PC-3 (cell line): ENCODE measurements at regions of chr14 and their contacts with region 1.

Region 1: DNA sequence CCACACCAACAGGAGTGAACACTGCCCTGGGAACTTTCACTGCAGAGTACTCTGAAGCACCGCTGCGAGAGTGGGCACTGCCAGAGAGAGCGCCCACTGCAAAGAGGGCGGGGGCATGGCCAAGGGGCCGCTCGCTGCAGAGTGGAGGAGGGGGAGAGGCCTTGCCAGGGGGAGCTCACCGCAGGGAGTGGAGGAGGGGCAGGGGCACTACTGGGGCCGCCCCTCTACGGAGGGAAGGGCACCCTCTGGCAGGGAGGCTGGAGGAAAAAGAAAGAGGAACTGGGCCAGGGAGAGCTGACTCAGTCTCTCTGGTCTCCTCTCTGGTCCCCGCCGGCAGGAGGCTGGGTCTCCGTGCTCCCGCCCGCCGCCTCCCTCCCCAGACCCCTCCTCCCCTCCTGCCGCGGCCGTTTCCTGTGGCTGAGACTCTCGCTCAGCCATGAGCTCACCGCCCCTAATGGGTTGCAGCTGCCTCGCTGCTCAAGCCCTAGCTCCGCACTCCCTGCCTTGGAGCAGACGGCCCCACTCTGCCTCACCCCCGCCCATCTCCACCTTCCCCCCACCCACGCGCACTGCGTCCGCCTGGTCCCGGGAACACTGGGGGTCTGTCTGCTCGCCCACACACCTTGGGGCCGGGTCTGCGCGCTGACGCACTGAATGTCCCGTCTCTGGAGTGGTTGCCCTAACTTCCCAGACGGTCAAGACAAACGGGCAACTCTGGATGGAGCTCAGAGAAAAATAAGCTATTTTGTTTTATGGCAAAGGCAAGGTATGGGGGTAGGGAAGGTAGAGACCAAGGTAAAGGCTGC is 1.3 kb downstream of the ARHGEF40 start:
- DNase-seq: peak; percentile 11
- ATAC-seq: peak; percentile 5
- H3K4me3 ChIP-seq: peak overlapping the region; percentile 72
- H3K27ac ChIP-seq: no peak overlapping the region
- H3K4me1 ChIP-seq: peaks cover 6% of the 10 kb centered on the region; the same call in 1 of the 2 replicates
- H3K27me3 ChIP-seq: peaks cover 44% of the 10 kb centered on the region
- CTCF ChIP-seq: no peak

Region 2: GRCh38 chr14:20305265-20306078 is 766.0 kb before region 1 on chr14 and contains the start of gene TTC5:
- CTCF ChIA-PET with region 1: no interaction called
- POLR2A ChIA-PET with region 1: no interaction called
- intact Hi-C with region 1: no loop called
- DNase-seq: peak; percentile 93
- ATAC-seq: peak; percentile 94
- H3K4me3 ChIP-seq: peak within 1 kb of the TSS; percentile 81
- H3K27ac ChIP-seq: no peak within 1 kb of the TSS
- H3K4me1 ChIP-seq: peaks cover 19% of the 10 kb centered on the region
- H3K27me3 ChIP-seq: no peaks in the 10 kb centered on the region
- CTCF ChIP-seq: peak; percentile 97
- total RNA-seq, gene TTC5: 9.8 and 23.3 TPM in 2 replicates

Region 3: GRCh38 chr14:21087294-21088091 is 16.1 kb after region 1 on chr14:
- CTCF ChIA-PET with region 1: interaction called, 8 read pairs
- POLR2A ChIA-PET with region 1: interaction called, 11 read pairs
- intact Hi-C with region 1: no loop called
- DNase-seq: peak; percentile 53
- ATAC-seq: peak; percentile 49
- H3K4me3 ChIP-seq: no peak overlapping the region
- H3K27ac ChIP-seq: no peak overlapping the region
- H3K4me1 ChIP-seq: no peaks in the 10 kb centered on the region
- H3K27me3 ChIP-seq: no peaks in the 10 kb centered on the region
- CTCF ChIP-seq: no peak

Region 4: DNA sequence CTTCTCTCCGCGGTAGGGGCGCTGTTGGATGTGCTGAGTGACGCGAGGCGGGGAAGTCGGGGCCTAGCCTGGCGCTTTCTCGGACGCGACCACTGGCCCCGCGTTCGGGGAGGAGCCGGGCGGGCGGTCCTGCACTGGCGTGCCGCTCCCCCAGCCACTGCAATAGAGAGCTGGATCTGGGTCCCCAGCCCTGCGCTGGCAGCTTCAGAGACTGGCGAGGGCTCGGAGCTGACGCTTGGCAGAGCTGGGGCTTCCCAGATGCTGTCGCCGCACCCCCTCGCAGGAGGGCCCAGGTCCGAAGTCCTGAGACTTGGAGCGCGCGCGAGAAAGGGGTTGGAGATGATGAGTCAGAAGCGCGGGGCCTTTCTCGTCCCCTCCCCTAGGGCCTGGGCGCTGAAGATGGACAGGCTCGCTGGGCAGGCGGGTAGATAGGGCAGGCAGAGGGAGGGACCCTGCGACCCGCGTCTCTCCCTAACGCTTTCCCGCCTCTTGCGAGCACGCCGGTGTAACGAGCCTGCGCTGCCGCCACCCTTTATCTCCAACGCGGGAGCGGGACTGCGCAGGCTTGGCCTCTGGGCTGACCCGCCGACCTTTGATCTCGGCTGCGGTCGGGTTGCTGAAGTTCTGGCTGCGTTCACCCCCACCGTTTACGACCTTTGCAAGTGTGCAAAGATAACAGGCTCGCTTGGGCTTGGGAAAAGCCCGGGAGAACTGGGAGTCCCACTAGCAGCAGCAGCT is 32.5 kb after region 1 on chr14:
- CTCF ChIA-PET with region 1: interaction called, 34 read pairs
- POLR2A ChIA-PET with region 1: no interaction called
- intact Hi-C with region 1: loop called (anchors 1 kb)
- DNase-seq: peak; percentile 96
- ATAC-seq: peak; percentile 86
- H3K4me3 ChIP-seq: peak overlapping the region; percentile 69
- H3K27ac ChIP-seq: peak overlapping the region; percentile 80
- H3K4me1 ChIP-seq: peaks cover 49% of the 10 kb centered on the region
- H3K27me3 ChIP-seq: no peaks in the 10 kb centered on the region
- CTCF ChIP-seq: peak; percentile 67